OCI-LY7 (cell line): ENCODE measurements at regions of chr12 and their contacts with region 1.

Region 1: DNA sequence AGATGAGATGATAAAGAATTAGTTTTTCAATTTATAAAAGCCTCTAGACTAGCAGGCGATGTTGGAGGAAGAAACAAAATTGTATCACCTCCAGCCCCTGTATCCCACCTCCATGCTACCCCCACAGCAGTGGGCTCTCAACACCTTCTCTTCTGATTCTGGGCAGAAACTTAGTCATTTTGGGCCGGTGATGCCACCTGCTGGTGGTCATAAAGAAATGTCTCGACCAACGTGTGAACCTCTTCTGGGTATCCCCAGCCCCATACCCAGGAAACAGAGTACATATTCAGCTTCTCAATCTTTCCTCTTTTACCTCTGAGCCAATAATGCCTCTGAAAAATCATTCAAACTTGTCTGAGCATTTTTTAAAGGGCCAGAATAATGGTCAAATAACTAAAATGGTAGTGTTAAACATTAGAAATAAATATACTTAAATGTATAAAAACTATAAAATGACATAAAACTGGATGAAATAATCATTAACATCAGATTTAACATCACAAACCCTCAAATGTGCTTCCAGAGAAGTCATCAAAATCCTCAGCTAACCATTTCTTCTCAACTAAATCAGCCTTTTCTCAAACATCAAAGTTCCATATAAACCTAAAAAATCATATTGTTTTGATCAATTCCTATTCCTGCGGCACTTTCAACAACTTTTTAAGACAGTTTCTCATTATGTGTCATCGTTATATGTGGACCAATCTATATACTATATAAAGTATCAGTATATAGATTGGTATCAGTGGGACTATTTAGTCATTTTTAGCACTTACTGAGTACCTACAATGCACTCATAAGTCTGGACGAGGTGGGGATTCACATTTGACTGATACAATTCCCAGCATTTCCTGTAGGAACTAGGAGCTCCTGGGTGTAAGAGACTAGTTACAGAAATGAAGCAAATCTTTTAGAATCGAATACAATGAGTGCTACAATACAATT is 69.4 kb downstream of the ATXN2 start:
- DNase-seq: peak; percentile 77
- H3K4me3 ChIP-seq: no peak overlapping the region
- H3K27ac ChIP-seq: no peak overlapping the region
- H3K4me1 ChIP-seq: no peaks in the 10 kb centered on the region
- CTCF ChIP-seq: peak; percentile 93

Region 2: GRCh38 chr12:111396726-111397445 is 132.8 kb before region 1 on chr12:
- CTCF ChIA-PET with region 1: interaction called, 3 read pairs
- POLR2A ChIA-PET with region 1: interaction called, 5 read pairs
- intact Hi-C with region 1: loop called (anchors 1 kb)
- DNase-seq: peak; percentile 89
- H3K4me3 ChIP-seq: peak overlapping the region; percentile 2
- H3K27ac ChIP-seq: no peak overlapping the region
- H3K4me1 ChIP-seq: peaks cover 7% of the 10 kb centered on the region
- CTCF ChIP-seq: peak; percentile 96

Region 3: GRCh38 chr12:111451649-111452129 is 78.0 kb before region 1 on chr12:
- CTCF ChIA-PET with region 1: no interaction called
- POLR2A ChIA-PET with region 1: interaction called, 4 read pairs
- intact Hi-C with region 1: loop called (anchors 1 kb)
- DNase-seq: peak; percentile 68
- H3K4me3 ChIP-seq: no peak overlapping the region
- H3K27ac ChIP-seq: no peak overlapping the region
- H3K4me1 ChIP-seq: peaks cover 26% of the 10 kb centered on the region
- CTCF ChIP-seq: peak; percentile 99

Region 4: DNA sequence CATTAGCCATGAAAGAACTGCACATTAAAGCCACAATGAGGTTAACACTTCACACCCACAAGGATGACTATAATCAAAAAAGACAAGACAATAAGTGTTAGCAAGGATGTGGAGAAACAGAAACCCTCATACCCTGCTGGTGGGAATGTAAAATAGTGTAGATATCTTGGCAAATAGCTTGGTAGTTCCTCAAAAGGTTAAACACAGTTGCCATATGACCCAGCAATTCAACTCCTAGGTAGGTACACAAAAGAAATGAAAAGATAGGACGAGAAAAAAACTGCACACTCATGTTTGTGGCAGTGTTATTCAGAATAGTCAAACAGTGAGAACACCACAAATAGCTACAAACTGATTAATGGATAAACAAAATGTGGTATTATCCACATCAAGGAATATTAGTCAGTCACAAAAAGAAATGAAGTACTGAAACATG is 24.1 kb before region 1 on chr12:
- CTCF ChIA-PET with region 1: no interaction called
- POLR2A ChIA-PET with region 1: no interaction called
- intact Hi-C with region 1: no loop called
- DNase-seq: no peak
- H3K4me3 ChIP-seq: no peak overlapping the region
- H3K27ac ChIP-seq: no peak overlapping the region
- H3K4me1 ChIP-seq: no peaks in the 10 kb centered on the region
- CTCF ChIP-seq: no peak

Region 5: GRCh38 chr12:111673503-111673902 is 143.8 kb after region 1 on chr12:
- CTCF ChIA-PET with region 1: no interaction called
- POLR2A ChIA-PET with region 1: no interaction called
- intact Hi-C with region 1: loop called (anchors 10 kb)
- DNase-seq: peak; percentile 37
- H3K4me3 ChIP-seq: no peak overlapping the region
- H3K27ac ChIP-seq: no peak overlapping the region
- H3K4me1 ChIP-seq: no peaks in the 10 kb centered on the region
- CTCF ChIP-seq: peak; percentile 73

Region 6: DNA sequence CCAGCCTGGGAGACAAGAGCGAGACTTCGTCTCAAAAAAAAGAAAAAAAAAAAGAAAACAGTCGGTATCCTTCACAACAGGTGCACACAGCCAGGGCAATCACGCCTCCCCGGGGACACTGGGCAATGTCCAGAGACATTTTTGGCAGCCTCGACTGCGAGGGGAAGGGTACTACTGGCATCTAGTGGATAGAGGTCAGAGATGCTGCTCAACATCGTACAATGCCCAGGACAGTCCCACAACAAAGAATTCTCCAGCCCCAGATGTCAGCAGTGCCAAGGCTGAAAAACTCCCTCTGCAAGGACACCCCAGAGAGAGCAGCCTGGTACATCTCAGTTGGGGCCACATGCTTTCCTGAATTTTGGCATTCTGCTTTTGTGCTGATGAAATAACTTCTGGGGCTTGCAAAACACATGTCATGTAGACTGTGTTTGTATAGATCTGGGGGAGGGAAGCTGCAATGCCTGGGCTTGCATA is 258.5 kb after region 1 on chr12:
- CTCF ChIA-PET with region 1: no interaction called
- POLR2A ChIA-PET with region 1: no interaction called
- intact Hi-C with region 1: loop called (anchors 1 kb)
- DNase-seq: peak; percentile 66
- H3K4me3 ChIP-seq: no peak overlapping the region
- H3K27ac ChIP-seq: no peak overlapping the region
- H3K4me1 ChIP-seq: no peaks in the 10 kb centered on the region
- CTCF ChIP-seq: peak; percentile 74

Region 7: GRCh38 chr12:111819191-111820150 is 289.8 kb after region 1 on chr12:
- CTCF ChIA-PET with region 1: no interaction called
- POLR2A ChIA-PET with region 1: no interaction called
- intact Hi-C with region 1: no loop called
- DNase-seq: peak; percentile 59
- H3K4me3 ChIP-seq: no peak overlapping the region
- H3K27ac ChIP-seq: peak overlapping the region; percentile 60
- H3K4me1 ChIP-seq: peaks cover 32% of the 10 kb centered on the region
- CTCF ChIP-seq: no peak